ENCODE measurements at regions of chr3 and their contacts with region 1.

Region 1: GRCh38 chr3:169112153-169112892 is 551.2 kb downstream of the MECOM start:
- DNase-seq: peak; percentile 67
- H3K4me3 ChIP-seq: peak overlapping the region; percentile 33
- H3K27ac ChIP-seq: peak overlapping the region; percentile 60
- H3K4me1 ChIP-seq: peaks cover 33% of the 10 kb centered on the region
- H3K27me3 ChIP-seq: no peaks in the 10 kb centered on the region

Region 2: GRCh38 chr3:168095611-168096209 is 1016.6 kb before region 1 on chr3 and contains the start of gene GOLIM4:
- in situ Hi-C with region 1: loop called (anchors 25 kb)
- DNase-seq: peak; percentile 99
- H3K4me3 ChIP-seq: peak within 1 kb of the TSS; percentile 79
- H3K27ac ChIP-seq: peak within 1 kb of the TSS; percentile 97
- H3K4me1 ChIP-seq: peaks cover 60% of the 10 kb centered on the region
- H3K27me3 ChIP-seq: no peaks in the 10 kb centered on the region
- total RNA-seq, gene GOLIM4: 57.0 and 66.8 TPM in 2 replicates

Region 3: GRCh38 chr3:168714609-168715240 is 397.6 kb before region 1 on chr3:
- in situ Hi-C with region 1: no loop called
- DNase-seq: no peak
- H3K4me3 ChIP-seq: no peak overlapping the region
- H3K27ac ChIP-seq: no peak overlapping the region
- H3K4me1 ChIP-seq: no peaks in the 10 kb centered on the region
- H3K27me3 ChIP-seq: no peaks in the 10 kb centered on the region

Region 4: GRCh38 chr3:169034401-169034800 is 77.9 kb before region 1 on chr3:
- in situ Hi-C with region 1: no loop called
- DNase-seq: peak; percentile 77
- H3K4me3 ChIP-seq: no peak overlapping the region
- H3K27ac ChIP-seq: no peak overlapping the region
- H3K4me1 ChIP-seq: peaks cover 10% of the 10 kb centered on the region
- H3K27me3 ChIP-seq: no peaks in the 10 kb centered on the region

Region 5: DNA sequence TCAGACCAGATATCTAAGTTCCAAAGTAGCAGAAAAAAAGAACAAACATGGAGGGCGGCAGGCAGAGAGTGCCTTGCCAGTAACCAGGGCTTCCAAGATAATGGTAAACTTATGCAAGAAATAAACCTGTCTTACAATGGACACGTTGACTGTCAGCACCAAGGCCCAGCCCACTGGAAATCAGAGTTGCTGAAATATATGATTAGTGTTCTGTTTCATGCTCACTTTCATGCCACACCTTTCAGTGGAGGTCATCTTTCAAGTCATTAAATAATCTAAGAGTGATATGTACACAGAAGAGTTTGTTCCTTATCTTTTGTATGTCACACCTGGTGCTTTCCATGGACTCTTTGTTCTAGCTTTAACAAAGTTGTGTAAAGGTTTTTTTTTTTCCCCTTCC is 193.1 kb after region 1 on chr3:
- in situ Hi-C with region 1: no loop called
- DNase-seq: no peak
- H3K4me3 ChIP-seq: no peak overlapping the region
- H3K27ac ChIP-seq: no peak overlapping the region
- H3K4me1 ChIP-seq: no peaks in the 10 kb centered on the region
- H3K27me3 ChIP-seq: no peaks in the 10 kb centered on the region

Measured in GM23248 (cell line).